Vagina (tissue), 2 donors: ENCODE measurements at regions of chr19 and their contacts with region 1.

Region 1: DNA sequence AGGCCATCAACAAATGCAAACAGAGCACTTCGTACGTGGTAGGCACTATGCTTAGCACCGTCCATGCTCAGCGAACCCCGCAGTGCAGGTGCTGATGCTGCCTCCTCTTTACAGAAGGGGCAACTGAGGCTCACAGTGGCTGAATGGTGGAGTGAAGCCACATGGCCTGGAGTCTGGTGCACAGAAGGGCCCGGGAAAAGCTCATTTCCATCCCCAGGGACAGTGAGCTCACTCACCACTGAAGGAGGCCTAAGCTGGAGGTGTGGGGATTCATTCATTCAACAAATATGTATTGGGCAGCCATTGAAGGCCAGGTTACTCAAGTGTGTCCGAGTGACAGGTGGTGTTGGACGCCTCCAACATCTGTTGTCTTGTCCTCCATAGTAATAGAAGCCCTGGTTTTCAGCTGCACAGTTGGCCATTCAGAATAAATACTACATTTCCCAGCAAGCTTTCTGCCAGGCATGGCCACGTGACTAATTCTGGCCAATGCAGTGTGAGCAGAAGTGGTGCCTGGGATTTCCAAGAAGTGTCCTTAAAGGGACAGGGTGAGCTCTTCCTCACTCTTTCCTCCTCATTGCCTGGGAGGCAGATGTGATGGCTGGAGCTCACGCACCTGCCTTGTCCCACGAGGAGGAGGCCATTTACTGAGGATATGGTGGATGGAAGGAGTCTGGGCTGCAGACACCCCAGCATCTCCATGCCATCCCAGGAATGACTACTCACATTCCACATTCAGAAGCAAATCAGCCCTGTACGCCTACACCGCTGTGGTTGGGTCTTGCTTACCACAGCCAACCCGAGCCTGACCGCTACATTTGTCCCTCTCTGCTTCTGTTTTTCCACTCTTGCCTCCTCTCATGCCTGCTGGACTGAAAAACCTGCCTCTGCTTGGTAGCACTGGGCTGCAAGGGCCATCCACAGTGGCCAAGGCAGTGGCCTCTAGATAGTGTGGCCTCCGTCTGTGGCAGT is 2.3 kb upstream of the ZNRF4 start:
- DNase-seq: no peak
- H3K4me3 ChIP-seq: no peak overlapping the region
- H3K27ac ChIP-seq: no peak overlapping the region
- H3K4me1 ChIP-seq: no peaks in the 10 kb centered on the region
- H3K27me3 ChIP-seq: no peaks in the 10 kb centered on the region
- CTCF ChIP-seq: no peak
- POLR2A ChIP-seq: no peak

Region 2: DNA sequence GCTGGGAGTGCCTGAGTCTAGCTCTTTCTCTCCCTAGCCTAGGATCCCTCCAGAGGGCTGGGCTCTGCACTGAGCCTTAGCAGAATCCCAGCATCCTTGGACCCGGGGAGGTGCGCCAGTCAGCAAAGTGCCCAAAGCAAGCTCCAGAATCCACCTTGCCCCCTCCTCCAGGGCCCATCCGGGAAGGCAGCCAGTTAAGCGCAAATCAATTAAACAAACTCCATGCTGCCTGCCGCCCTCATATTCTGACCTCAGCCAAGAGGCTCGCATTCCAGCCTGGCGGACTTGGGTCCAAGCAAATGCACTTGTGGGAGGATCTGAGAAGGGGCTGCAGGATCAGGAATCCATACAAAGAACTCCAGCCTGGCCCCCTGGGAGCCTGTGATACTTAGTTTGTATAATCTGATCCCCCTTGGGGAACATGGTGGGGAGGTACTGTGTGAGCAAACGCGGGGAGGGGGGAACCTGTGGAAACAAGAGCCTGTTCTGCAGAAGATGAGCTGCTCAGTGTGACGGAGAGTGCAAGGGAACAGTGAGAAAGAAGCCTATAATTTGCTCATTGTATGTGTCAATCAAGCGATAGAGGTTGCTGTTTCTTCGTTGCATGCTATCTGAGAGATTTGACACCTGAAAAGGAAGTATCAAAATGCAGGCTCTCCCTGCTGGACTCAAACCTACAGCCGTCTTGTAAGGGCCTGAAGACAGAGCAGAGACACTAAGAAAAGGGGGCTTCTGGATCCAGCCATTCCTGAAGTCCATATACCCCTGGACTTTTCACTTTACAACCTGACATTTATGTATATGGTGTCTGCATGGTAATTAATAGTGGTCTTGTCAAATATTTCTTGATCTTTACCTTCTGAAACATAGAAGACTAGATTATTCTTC is 31.8 kb after region 1 on chr19:
- intact Hi-C with region 1: no loop called
- DNase-seq: no peak
- H3K4me3 ChIP-seq: no peak overlapping the region
- H3K27ac ChIP-seq: no peak overlapping the region
- H3K4me1 ChIP-seq: no peaks in the 10 kb centered on the region
- H3K27me3 ChIP-seq: no peaks in the 10 kb centered on the region
- CTCF ChIP-seq: no peak
- POLR2A ChIP-seq: no peak

Region 3: DNA sequence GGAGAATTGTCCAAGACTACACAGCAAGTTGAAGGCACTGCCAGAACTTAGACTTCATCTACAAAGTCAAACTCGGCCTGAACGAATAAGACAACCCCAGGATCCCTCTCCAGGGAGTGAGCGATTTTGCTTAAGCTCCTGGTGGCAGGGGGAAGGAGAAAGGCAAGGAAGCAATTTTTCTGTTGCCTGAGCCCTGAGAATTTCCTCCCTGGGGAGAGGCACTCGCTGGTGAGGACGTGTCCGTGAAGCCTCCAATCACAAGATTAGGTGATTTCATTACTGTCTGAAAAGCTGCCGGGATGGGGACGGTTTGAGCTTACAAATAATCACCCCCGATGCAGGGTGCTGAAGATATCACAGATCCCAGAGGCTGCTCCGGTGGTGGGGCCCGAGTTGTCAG is 69.2 kb after region 1 on chr19:
- intact Hi-C with region 1: loop called (anchors 2 kb)
- DNase-seq: no peak
- H3K4me3 ChIP-seq: no peak overlapping the region
- H3K27ac ChIP-seq: no peak overlapping the region
- H3K4me1 ChIP-seq: no peaks in the 10 kb centered on the region
- H3K27me3 ChIP-seq: no peaks in the 10 kb centered on the region
- CTCF ChIP-seq: no peak
- POLR2A ChIP-seq: no peak

Region 4: GRCh38 chr19:5530701-5531100 is 77.8 kb after region 1 on chr19:
- intact Hi-C with region 1: loop called (anchors 2 kb)
- DNase-seq: no peak
- H3K4me3 ChIP-seq: no peak overlapping the region
- H3K27ac ChIP-seq: no peak overlapping the region
- H3K4me1 ChIP-seq: no peaks in the 10 kb centered on the region
- H3K27me3 ChIP-seq: no peaks in the 10 kb centered on the region
- CTCF ChIP-seq: no peak
- POLR2A ChIP-seq: no peak